PC-3 (cell line): ENCODE measurements at regions of chr5 and their contacts with region 1.

Region 1: DNA sequence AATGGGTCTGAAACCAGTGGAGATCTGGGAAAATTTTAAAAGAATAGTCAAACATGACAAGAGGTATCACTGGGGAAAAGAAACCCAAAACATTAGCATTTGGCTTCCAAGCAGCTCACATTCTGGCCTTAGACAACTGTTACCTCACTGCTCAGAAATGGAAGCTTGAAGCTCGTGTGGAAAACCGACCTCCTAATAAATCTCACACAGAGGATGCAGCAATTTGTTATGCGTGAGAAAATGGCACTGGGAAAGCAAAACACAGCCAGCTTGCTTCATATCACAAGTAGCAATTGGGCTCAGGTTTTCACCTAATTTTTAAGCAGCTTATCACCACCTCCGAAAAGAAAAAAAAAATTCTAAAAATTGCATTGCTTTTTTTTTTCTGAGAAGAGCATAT is 103.3 kb upstream of the TAS2R1 start:
- DNase-seq: no peak
- ATAC-seq: no peak
- H3K4me3 ChIP-seq: no peak overlapping the region
- H3K27ac ChIP-seq: no peak overlapping the region
- H3K4me1 ChIP-seq: no peaks in the 10 kb centered on the region
- H3K27me3 ChIP-seq: no peaks in the 10 kb centered on the region
- CTCF ChIP-seq: no peak

Region 2: DNA sequence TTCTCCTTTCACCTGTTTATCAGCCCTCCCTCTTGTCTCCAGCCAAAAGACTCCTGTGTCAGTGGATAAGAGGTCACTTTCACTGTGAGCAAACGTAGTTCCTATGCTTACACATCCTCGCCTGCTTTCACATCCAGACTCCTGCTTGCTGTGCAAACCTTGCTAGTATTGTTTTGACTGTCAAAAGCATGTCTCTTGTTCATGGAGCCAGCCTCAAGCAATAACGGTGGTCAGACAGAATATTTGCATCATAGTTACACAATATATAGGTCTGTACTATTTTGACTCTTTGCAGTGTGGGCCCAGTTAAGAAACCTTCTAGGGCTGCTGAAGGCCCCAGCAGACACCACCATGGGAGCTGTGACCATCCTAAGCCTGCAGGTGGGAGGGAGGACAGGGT is 607.6 kb before region 1 on chr5:
- CTCF ChIA-PET with region 1: no interaction called
- POLR2A ChIA-PET with region 1: no interaction called
- intact Hi-C with region 1: no loop called
- DNase-seq: no peak
- ATAC-seq: no peak
- H3K4me3 ChIP-seq: no peak overlapping the region
- H3K27ac ChIP-seq: no peak overlapping the region
- H3K4me1 ChIP-seq: no peaks in the 10 kb centered on the region
- H3K27me3 ChIP-seq: no peaks in the 10 kb centered on the region
- CTCF ChIP-seq: no peak

Region 3: DNA sequence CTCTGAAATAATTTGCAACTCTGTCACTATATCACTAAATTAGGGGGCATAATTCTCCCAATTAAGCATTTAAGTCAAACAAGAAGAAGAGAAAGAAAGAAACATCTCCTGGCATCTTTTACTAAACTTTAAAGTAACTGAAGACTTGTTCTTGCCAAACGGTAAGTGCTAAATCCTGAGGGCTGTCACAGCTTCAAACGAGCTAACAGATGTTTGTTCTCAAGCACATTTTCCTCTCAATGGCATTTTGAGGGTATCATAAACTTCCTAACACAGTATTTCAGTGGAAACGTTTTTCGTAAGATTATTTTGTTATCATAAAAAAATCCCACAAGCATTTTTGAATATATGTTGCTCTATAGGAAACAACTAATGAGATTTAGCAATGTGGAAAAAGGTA is 66.1 kb after region 1 on chr5:
- CTCF ChIA-PET with region 1: no interaction called
- POLR2A ChIA-PET with region 1: interaction called, 15 read pairs
- intact Hi-C with region 1: no loop called
- DNase-seq: no peak
- ATAC-seq: no peak
- H3K4me3 ChIP-seq: no peak overlapping the region
- H3K27ac ChIP-seq: no peak overlapping the region
- H3K4me1 ChIP-seq: no peaks in the 10 kb centered on the region
- H3K27me3 ChIP-seq: no peaks in the 10 kb centered on the region
- CTCF ChIP-seq: no peak

Region 4: DNA sequence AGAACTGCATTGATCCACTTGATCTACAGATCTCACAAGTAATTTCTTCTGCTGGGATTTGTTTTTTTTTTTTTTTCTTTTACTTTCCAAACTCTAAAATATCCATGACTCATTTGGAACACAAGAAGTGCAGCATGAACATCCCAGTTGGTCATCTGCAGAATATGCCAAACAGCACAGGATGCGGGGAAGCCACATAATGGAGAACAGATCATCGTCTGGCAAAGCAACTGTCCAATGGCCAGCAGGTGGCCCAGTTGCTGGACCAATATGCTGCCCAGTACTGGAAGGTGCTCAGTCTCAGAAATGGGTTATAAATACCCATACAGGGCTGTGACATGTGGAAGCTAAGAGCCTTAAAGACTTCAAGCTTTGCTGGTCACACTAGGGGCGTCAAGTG is 118.0 kb after region 1 on chr5:
- CTCF ChIA-PET with region 1: no interaction called
- POLR2A ChIA-PET with region 1: no interaction called
- intact Hi-C with region 1: no loop called
- DNase-seq: peak; percentile 92
- ATAC-seq: peak; percentile 72
- H3K4me3 ChIP-seq: no peak overlapping the region
- H3K27ac ChIP-seq: no peak overlapping the region
- H3K4me1 ChIP-seq: peaks cover 10% of the 10 kb centered on the region; the same call in 1 of the 2 replicates
- H3K27me3 ChIP-seq: 0 out of 2 replicates have a peak, but pooled peaks cover 5% of the 10 kb centered on the region
- CTCF ChIP-seq: peak; percentile 88